Heart left ventricle (tissue), 16 donors: ENCODE measurements at regions of chr9 and their contacts with region 1.

Region 1: GRCh38 chr9:21831961-21832509 is 29.6 kb downstream of the MTAP start:
- DNase-seq: no peak
- ATAC-seq: peak in 3 of 4 donors; percentile 57 to 67 (median 58)
- H3K4me3 ChIP-seq: no peak overlapping the region
- H3K27ac ChIP-seq: peak overlapping the region in 2 of 12 donors; percentile 12 to 15
- H3K4me1 ChIP-seq: peaks cover 0 to 34% (median 3%) of the 10 kb centered on the region in 12 donors
- H3K27me3 ChIP-seq: no peaks in the 10 kb centered on the region
- CTCF ChIP-seq: no peak
- POLR2A ChIP-seq: no peak

Region 2: GRCh38 chr9:21086538-21086937 is 745.5 kb before region 1 on chr9:
- intact Hi-C with region 1: no loop called
- DNase-seq: no peak
- ATAC-seq: no peak
- H3K4me3 ChIP-seq: no peak overlapping the region
- H3K27ac ChIP-seq: no peak overlapping the region
- H3K4me1 ChIP-seq: peaks cover 0 to 17% (median 3%) of the 10 kb centered on the region in 12 donors
- H3K27me3 ChIP-seq: no peaks in the 10 kb centered on the region
- CTCF ChIP-seq: no peak
- POLR2A ChIP-seq: no peak

Region 3: DNA sequence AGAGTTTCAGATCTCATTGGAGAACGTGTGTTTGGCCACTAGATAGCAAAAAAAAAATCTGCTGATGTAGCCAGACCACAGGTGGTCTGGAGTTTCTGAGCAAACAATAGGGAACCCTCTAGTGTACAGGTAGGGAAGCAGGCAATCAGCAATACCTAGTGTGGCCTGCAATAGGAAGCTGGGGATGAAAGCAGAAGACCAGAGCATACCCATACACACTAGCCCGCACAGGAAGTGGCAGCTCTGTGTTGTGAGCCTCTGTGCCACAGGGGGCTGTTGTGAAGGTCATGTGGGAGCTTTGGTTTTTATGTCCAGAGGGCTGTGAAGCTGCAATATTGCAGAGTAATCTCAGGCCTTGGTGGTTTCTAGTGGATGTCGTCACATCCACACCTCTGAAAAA is 51.6 kb after region 1 on chr9:
- intact Hi-C with region 1: loop called in 1 of 10 experiments (anchors 10 kb)
- DNase-seq: no peak
- ATAC-seq: no peak
- H3K4me3 ChIP-seq: no peak overlapping the region
- H3K27ac ChIP-seq: no peak overlapping the region
- H3K4me1 ChIP-seq: no peaks in the 10 kb centered on the region
- H3K27me3 ChIP-seq: no peaks in the 10 kb centered on the region
- CTCF ChIP-seq: no peak
- POLR2A ChIP-seq: no peak

Region 4: DNA sequence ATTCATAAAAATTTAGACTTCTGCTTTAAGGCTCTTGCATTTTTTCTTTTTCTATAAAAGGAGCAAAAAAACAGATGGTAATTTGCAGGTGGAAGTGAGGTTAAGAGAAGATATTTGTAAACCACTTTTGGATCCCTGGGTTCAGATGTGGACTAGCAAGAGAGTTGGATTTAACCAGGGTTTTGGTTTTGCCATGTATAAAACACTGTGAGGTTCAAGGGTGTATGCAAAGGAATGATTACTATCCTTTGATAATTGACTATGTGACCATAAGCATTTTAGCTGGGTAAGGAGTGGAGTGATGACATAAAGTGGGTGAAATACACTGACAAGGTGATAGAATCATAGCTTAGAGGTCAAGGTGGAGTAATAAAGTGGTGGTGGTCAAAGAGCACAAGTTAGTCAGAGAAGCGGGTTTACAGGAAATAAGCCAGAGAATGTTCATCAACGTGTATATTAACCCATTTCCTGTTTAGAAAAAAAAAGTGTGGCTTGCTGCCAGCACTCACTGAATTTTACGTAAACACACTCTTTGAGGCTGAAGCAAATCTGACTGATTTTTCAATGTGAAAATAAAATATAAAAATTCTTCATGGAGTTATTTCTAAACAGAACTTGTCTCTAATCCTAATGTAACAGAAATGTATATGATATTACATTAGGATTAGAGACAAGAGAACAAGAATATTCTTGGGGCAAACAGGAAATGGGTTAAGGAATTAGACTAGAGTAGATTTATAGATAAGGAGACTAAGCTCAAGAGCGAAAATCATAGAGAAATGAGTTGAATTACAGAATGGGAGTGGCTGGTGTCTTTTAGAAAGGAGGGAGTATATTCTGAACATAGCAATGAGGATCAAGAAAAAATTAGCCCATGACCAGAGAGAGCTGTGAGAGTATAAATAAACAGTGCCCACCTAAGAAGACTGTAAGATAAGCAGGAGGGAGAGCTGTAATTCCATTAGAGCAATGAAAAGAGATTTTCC is 87.6 kb after region 1 on chr9:
- intact Hi-C with region 1: loop called in 1 of 10 experiments (anchors 10 kb)
- DNase-seq: no peak
- ATAC-seq: no peak
- H3K4me3 ChIP-seq: no peak overlapping the region
- H3K27ac ChIP-seq: peak overlapping the region in 1 of 12 donors; percentile 12
- H3K4me1 ChIP-seq: peaks cover 0 to 13% (median 0%) of the 10 kb centered on the region in 12 donors
- H3K27me3 ChIP-seq: no peaks in the 10 kb centered on the region
- CTCF ChIP-seq: no peak
- POLR2A ChIP-seq: no peak

Region 5: GRCh38 chr9:22041792-22042191 is 209.8 kb after region 1 on chr9:
- intact Hi-C with region 1: no loop called
- DNase-seq: no peak
- ATAC-seq: no peak
- H3K4me3 ChIP-seq: no peak overlapping the region
- H3K27ac ChIP-seq: no peak overlapping the region
- H3K4me1 ChIP-seq: peaks cover 0 to 10% (median 0%) of the 10 kb centered on the region in 12 donors
- H3K27me3 ChIP-seq: no peaks in the 10 kb centered on the region
- CTCF ChIP-seq: no peak
- POLR2A ChIP-seq: no peak

Region 6: DNA sequence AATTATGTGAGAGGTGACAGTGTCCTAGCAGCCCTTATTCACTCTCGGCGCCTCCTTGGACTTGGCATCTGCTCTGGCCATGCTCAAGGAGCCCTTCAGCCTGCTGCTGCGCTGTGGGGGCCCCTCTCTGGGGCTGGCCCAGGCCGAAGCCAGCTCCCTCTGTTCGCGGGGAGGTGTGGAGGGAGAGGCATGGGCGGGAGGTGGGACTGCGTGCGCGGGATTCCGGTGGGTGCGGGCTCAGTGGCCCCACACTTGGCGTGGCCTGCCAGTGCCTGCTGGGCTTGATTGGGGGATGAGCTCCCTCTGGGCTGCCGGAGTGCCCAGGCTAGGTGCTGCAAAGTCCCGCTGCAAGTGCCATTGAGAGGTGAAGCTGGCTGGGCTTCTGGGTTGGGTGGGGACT is 601.7 kb after region 1 on chr9:
- intact Hi-C with region 1: loop called in 1 of 10 experiments (anchors 10 kb)
- DNase-seq: no peak
- ATAC-seq: no peak
- H3K4me3 ChIP-seq: no peak overlapping the region
- H3K27ac ChIP-seq: no peak overlapping the region
- H3K4me1 ChIP-seq: no peaks in the 10 kb centered on the region
- H3K27me3 ChIP-seq: peaks cover 0 to 4% (median 0%) of the 10 kb centered on the region in 9 donors
- CTCF ChIP-seq: no peak
- POLR2A ChIP-seq: no peak